Psoas muscle (tissue), 8 donors: ENCODE measurements at regions of chr11 and their contacts with region 1.

Region 1: GRCh38 chr11:4187055-4187988 is 92.7 kb downstream of the RRM1 start:
- DNase-seq: peak; percentile 93 to 95
- ATAC-seq: peak; percentile 90 to 98 (median 95)
- H3K4me3 ChIP-seq: peak overlapping the region; percentile 75
- H3K27ac ChIP-seq: no peak overlapping the region
- H3K4me1 ChIP-seq: peaks cover 12% of the 10 kb centered on the region
- H3K27me3 ChIP-seq: no peaks in the 10 kb centered on the region
- CTCF ChIP-seq: peak; percentile 98

Region 2: DNA sequence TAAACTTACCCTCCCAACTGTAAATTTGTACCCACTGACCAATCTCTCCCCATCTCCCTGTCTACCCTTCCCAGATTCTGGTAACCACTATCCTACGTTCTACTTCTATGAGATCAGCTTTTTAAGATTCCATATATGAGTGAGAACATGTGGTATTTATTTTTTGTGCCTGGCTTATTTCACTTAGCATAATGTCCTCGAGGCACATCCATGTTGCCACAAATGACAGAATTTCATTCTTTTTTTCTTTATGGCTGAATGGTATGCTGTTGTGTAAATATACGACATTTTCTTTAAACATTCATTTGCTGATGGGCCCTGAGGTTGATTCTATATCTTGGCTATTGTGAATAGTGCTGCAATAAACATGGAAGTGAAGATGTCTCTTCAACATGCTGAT is 167.4 kb before region 1 on chr11:
- intact Hi-C with region 1: no loop called
- DNase-seq: no peak
- ATAC-seq: no peak
- H3K4me3 ChIP-seq: no peak overlapping the region
- H3K27ac ChIP-seq: no peak overlapping the region
- H3K4me1 ChIP-seq: peaks cover 10% of the 10 kb centered on the region
- H3K27me3 ChIP-seq: no peaks in the 10 kb centered on the region
- CTCF ChIP-seq: no peak

Region 3: GRCh38 chr11:4211991-4212390 is 24.7 kb after region 1 on chr11:
- intact Hi-C with region 1: no loop called
- DNase-seq: no peak
- ATAC-seq: no peak
- H3K4me3 ChIP-seq: no peak overlapping the region
- H3K27ac ChIP-seq: no peak overlapping the region
- H3K4me1 ChIP-seq: no peaks in the 10 kb centered on the region
- H3K27me3 ChIP-seq: peaks cover 0 to 10% (median 0%) of the 10 kb centered on the region in 3 donors
- CTCF ChIP-seq: no peak

Region 4: DNA sequence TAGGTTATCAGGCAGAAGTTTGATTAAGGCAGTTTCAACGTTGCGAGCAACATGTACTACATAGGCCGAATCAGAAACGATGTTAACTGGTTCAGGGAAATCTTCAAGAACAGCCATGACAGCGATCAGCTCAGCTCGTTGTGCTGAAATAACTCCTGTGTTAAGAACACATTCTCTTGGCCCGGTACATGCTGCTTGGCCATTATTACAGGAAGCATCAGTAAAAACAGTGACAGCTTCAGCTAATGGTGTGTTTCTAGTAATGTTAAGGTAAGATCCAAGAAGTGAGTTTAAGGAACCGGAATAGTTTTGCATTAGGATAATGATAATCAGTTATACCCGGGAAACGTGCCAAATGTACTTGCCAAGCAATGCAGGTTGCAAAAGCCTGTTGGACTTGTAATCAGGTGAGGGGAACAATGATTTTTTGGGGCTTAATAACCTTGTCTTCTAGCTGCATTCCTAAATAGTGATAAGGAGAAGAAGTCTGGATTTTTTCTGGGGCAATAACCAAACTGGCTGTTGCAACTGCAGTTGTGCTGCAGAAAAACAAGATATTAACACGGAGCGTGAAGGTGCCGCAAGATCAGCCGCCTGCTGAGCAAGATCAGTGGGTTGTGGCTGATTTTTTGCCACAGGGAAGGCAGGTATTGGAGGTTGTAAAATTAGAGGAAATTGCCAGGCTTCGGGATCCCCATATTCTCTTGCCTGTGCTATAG is 309.4 kb after region 1 on chr11:
- intact Hi-C with region 1: loop called (anchors 1 to 5 kb)
- DNase-seq: no peak
- ATAC-seq: no peak
- H3K4me3 ChIP-seq: no peak overlapping the region
- H3K27ac ChIP-seq: no peak overlapping the region
- H3K4me1 ChIP-seq: no peaks in the 10 kb centered on the region
- H3K27me3 ChIP-seq: peaks cover 0 to 9% (median 2%) of the 10 kb centered on the region in 3 donors
- CTCF ChIP-seq: no peak

Region 5: DNA sequence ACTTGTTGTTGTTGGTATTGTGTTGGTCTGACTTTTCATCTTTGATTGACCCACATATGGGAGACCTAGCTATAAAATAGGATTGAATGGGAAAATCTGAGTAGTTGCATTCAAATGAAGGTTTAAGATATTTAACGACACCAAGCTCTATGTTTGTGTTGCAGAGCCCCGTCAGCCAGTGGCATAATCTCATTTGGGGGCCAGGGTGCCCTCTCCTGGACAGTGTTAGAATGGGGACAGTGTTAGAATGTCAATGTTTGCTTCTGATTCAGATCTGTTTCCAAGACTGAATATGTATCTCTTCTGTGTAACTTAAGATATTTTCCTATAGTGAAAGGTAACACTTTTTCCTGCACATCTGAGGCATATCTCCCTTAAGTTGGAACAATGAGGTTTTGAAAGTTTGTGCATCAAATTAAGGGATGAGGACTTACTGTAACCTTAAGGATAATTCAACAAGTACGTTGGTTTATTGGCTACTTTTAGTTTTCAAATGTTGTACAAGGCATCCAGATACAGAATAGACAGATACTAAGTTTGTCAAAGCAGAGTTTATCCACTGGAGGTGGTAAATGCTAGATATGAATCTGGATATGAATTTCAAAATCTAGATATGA is 352.4 kb after region 1 on chr11:
- intact Hi-C with region 1: loop called (anchors 1 to 2 kb)
- DNase-seq: peak; percentile 20 to 62
- ATAC-seq: peak; percentile 54 to 72 (median 65)
- H3K4me3 ChIP-seq: no peak overlapping the region
- H3K27ac ChIP-seq: no peak overlapping the region
- H3K4me1 ChIP-seq: no peaks in the 10 kb centered on the region
- H3K27me3 ChIP-seq: no peaks in the 10 kb centered on the region
- CTCF ChIP-seq: peak; percentile 76

Region 6: DNA sequence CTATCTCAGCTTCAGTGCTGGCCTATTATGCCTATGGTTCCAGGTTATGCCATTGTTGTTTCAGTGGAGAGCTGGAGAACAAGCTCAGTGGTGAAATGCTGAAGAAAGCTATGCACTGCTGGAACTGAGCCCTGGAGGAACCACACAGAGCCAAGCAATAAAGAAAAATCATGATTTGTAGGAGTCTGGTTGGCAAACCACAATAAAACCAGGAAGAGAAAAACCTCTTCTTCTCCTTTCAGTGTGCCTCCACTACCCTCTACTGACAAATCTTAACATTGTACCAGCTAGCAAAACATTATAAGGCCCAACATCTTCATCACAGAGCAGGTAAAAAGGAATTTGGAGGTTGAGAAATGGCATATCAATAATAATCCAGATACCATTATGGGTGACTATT is 639.1 kb after region 1 on chr11:
- intact Hi-C with region 1: loop called in 1 of 2 experiments (anchors 5 kb)
- DNase-seq: no peak
- ATAC-seq: no peak
- H3K4me3 ChIP-seq: no peak overlapping the region
- H3K27ac ChIP-seq: no peak overlapping the region
- H3K4me1 ChIP-seq: no peaks in the 10 kb centered on the region
- H3K27me3 ChIP-seq: no peaks in the 10 kb centered on the region
- CTCF ChIP-seq: peak; percentile 44

Region 7: GRCh38 chr11:5004424-5005274 is 817.3 kb after region 1 on chr11:
- intact Hi-C with region 1: loop called in 1 of 2 experiments (anchors 10 kb)
- DNase-seq: no peak
- ATAC-seq: no peak
- H3K4me3 ChIP-seq: no peak overlapping the region
- H3K27ac ChIP-seq: no peak overlapping the region
- H3K4me1 ChIP-seq: no peaks in the 10 kb centered on the region
- H3K27me3 ChIP-seq: peaks cover 0 to 4% (median 2%) of the 10 kb centered on the region in 3 donors
- CTCF ChIP-seq: peak; percentile 58